ENCODE measurements at regions of chr14 and their contacts with region 1.

Region 1: GRCh38 chr14:93115069-93115820 is 480 bp downstream of the ITPK1 start:
- DNase-seq: peak; percentile 87
- H3K4me3 Mint-ChIP-seq: peak overlapping the region; percentile 88
- H3K27ac Mint-ChIP-seq: peak overlapping the region; percentile 48
- H3K4me1 Mint-ChIP-seq: peaks cover 28% of the 10 kb centered on the region
- H3K27me3 Mint-ChIP-seq: peaks cover 1% of the 10 kb centered on the region

Region 2: GRCh38 chr14:92759300-92759678 is 356.0 kb before region 1 on chr14:
- intact Hi-C with region 1: no loop called
- DNase-seq: no peak
- H3K4me3 Mint-ChIP-seq: no peak overlapping the region
- H3K27ac Mint-ChIP-seq: no peak overlapping the region
- H3K4me1 Mint-ChIP-seq: peaks cover 28% of the 10 kb centered on the region
- H3K27me3 Mint-ChIP-seq: peaks cover 25% of the 10 kb centered on the region

Region 3: DNA sequence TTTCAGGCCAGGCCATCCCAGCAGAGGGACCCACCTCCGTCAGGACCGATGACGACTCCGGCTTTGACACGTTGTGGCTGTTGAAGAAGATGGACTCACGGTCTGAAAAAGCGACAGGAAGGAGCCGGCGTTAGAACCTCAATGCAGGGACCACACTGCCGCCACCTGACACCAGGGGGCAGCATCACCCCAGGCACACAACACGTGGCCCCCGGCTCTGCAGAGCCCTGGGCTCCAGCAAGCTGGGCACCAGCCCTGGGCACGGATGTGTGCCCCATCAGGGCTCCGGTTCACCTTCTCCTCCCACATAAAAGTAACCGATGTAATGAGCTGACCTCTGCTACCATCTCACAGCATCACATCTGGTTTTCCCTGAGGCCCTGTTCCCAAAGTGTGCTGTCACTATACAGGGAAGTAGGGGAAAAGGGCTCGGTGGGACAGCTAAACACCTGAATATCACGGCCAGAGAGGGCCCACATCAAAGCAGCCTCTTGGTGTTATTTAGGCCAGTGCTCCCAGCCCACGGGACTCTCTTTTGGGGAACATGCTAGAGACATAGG is 163.3 kb before region 1 on chr14:
- intact Hi-C with region 1: loop called (anchors 1 kb)
- DNase-seq: peak; percentile 66
- H3K4me3 Mint-ChIP-seq: no peak overlapping the region
- H3K27ac Mint-ChIP-seq: peak overlapping the region; percentile 15
- H3K4me1 Mint-ChIP-seq: no peaks in the 10 kb centered on the region
- H3K27me3 Mint-ChIP-seq: no peaks in the 10 kb centered on the region

Region 4: DNA sequence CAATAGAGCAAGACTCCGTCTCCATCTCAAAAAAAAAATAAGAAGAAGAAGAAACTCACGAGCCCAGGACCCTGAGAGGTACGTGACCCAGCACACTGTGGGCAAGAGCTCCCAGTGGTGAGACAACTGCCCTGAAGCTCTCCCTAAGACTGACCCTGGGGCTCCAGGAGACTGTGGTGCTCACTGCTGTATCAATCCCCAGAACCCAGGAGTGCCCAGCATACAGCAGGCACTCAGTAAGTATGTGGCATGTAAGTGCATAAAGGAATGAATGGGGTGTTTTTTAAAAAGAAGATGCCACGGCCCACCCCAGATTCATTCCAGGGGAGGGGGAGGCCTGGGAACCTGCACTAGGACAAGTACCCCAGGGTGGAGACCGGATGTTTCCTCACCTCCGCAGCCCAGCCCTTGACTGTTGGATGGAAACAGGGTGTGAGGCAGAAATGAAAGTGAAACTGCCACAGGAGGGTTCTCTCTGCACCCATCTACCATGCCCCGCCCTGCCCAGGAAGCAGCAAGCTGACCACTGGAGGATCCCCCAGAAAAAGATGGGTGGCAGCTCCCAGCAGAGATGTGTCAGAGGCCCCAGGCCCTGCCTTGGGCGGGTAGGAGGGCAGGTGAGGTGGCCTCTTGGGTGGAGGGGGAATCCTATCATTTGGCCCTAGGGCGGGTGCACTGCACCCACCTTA is 11.7 kb before region 1 on chr14:
- intact Hi-C with region 1: loop called (anchors 1 kb)
- DNase-seq: peak; percentile 77
- H3K4me3 Mint-ChIP-seq: peak overlapping the region; percentile 77
- H3K27ac Mint-ChIP-seq: peak overlapping the region; percentile 93
- H3K4me1 Mint-ChIP-seq: peaks cover 51% of the 10 kb centered on the region
- H3K27me3 Mint-ChIP-seq: no peaks in the 10 kb centered on the region

Region 5: GRCh38 chr14:93184388-93185353 is 69.4 kb after region 1 on chr14 and contains the starts of genes LYSET and MOAP1:
- intact Hi-C with region 1: loop called (anchors 1 kb)
- DNase-seq: peak; percentile 87
- H3K4me3 Mint-ChIP-seq: peak within 1 kb of the TSS; percentile 95
- H3K27ac Mint-ChIP-seq: peak within 1 kb of the TSS; percentile 89
- H3K4me1 Mint-ChIP-seq: peaks cover 38% of the 10 kb centered on the region
- H3K27me3 Mint-ChIP-seq: no peaks in the 10 kb centered on the region
- total RNA-seq, gene LYSET: 13.1 and 14.1 TPM in 2 replicates
- total RNA-seq, gene MOAP1: 16.8 and 18.4 TPM in 2 replicates

Region 6: GRCh38 chr14:93219103-93219726 is 104.0 kb after region 1 on chr14:
- intact Hi-C with region 1: loop called (anchors 1 kb)
- DNase-seq: peak; percentile 14
- H3K4me3 Mint-ChIP-seq: no peak overlapping the region
- H3K27ac Mint-ChIP-seq: no peak overlapping the region
- H3K4me1 Mint-ChIP-seq: no peaks in the 10 kb centered on the region
- H3K27me3 Mint-ChIP-seq: no peaks in the 10 kb centered on the region

Region 7: GRCh38 chr14:93285044-93285443 is 169.8 kb after region 1 on chr14:
- intact Hi-C with region 1: no loop called
- DNase-seq: no peak
- H3K4me3 Mint-ChIP-seq: no peak overlapping the region
- H3K27ac Mint-ChIP-seq: no peak overlapping the region
- H3K4me1 Mint-ChIP-seq: peaks cover 5% of the 10 kb centered on the region
- H3K27me3 Mint-ChIP-seq: no peaks in the 10 kb centered on the region

Region 8: GRCh38 chr14:94180655-94181271 is 1065.5 kb after region 1 on chr14:
- intact Hi-C with region 1: loop called (anchors 5 kb)
- DNase-seq: no peak
- H3K4me3 Mint-ChIP-seq: peak overlapping the region; percentile 11
- H3K27ac Mint-ChIP-seq: peak overlapping the region; percentile 51
- H3K4me1 Mint-ChIP-seq: peaks cover 11% of the 10 kb centered on the region
- H3K27me3 Mint-ChIP-seq: peaks cover 30% of the 10 kb centered on the region